Panc1 (cell line): ENCODE measurements at regions of chr12 and their contacts with region 1.

Region 1: GRCh38 chr12:46661110-46661845 is 164.5 kb downstream of the SLC38A4 start:
- DNase-seq: peak; percentile 87
- ATAC-seq: peak; percentile 65
- H3K4me3 ChIP-seq: no peak overlapping the region
- H3K27ac ChIP-seq: peak overlapping the region; percentile 89
- H3K4me1 ChIP-seq: peaks cover 79% of the 10 kb centered on the region
- H3K27me3 ChIP-seq: no peaks in the 10 kb centered on the region
- CTCF ChIP-seq: peak; percentile 84

Region 2: GRCh38 chr12:46459861-46460545 is 201.3 kb before region 1 on chr12:
- CTCF ChIA-PET with region 1: no interaction called
- POLR2A ChIA-PET with region 1: no interaction called
- in situ Hi-C with region 1: no loop called
- intact Hi-C with region 1: no loop called
- DNase-seq: no peak
- ATAC-seq: no peak
- H3K4me3 ChIP-seq: no peak overlapping the region
- H3K27ac ChIP-seq: peak overlapping the region; percentile 66
- H3K4me1 ChIP-seq: peaks cover 8% of the 10 kb centered on the region; the same call in 1 of the 2 replicates
- H3K27me3 ChIP-seq: no peaks in the 10 kb centered on the region
- CTCF ChIP-seq: no peak

Region 3: GRCh38 chr12:46473634-46474329 is 187.5 kb before region 1 on chr12:
- CTCF ChIA-PET with region 1: no interaction called
- POLR2A ChIA-PET with region 1: no interaction called
- in situ Hi-C with region 1: no loop called
- intact Hi-C with region 1: loop called (anchors 10 kb)
- DNase-seq: no peak
- ATAC-seq: peak; percentile 96
- H3K4me3 ChIP-seq: peak overlapping the region; percentile 11 to 23; a peak in 3 of 4 replicates
- H3K27ac ChIP-seq: peak overlapping the region; percentile 94
- H3K4me1 ChIP-seq: peaks cover 50% of the 10 kb centered on the region
- H3K27me3 ChIP-seq: no peaks in the 10 kb centered on the region
- CTCF ChIP-seq: no peak

Region 4: DNA sequence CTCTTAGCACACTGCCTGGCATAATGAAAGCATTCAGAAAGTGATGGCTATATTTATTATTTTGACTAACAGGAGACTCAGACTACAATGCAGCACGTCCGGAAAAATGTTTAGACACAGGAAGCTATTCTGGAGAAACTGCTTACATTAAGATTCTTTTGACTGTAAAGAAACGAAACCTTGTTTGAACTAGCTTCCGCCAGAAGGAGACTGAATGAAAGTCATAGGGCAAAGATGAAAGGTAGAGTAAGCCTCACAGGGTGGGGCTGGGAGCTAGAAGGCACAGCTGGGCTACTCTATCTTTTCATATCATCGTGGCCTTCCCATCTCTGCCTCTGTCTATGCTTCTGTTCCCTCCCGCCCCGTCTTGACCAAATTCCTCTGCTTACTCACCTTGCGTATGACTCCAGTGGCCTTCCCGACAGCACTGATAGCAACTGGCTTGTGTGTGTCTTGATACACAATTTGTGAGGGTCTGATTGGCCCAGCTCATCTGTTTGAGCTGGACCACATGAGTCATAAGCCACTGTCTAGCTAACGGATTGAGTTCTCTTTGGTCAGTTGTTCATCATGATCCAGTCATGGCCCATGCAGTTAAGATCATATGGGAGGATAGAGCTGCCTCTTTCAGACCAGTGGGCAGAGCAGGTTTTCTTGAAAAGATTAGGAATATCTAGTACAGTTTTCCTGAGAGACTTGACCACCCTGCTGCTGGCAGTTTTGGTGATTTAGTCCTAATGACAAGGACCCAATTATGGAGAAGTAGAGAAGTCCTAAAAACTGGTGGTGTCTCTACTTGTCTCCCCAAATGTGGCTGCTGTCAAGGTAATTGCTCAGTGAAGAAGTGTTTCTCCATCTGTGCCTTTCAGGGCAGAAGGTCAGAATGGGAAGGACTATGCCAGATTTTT is 137.2 kb before region 1 on chr12:
- CTCF ChIA-PET with region 1: no interaction called
- POLR2A ChIA-PET with region 1: no interaction called
- in situ Hi-C with region 1: no loop called
- intact Hi-C with region 1: no loop called
- DNase-seq: peak; percentile 94
- ATAC-seq: peak; percentile 84
- H3K4me3 ChIP-seq: peak overlapping the region; percentile 3 to 19; a peak in 3 of 4 replicates
- H3K27ac ChIP-seq: peak overlapping the region; percentile 60
- H3K4me1 ChIP-seq: peaks cover 7% of the 10 kb centered on the region
- H3K27me3 ChIP-seq: no peaks in the 10 kb centered on the region
- CTCF ChIP-seq: no peak

Region 5: DNA sequence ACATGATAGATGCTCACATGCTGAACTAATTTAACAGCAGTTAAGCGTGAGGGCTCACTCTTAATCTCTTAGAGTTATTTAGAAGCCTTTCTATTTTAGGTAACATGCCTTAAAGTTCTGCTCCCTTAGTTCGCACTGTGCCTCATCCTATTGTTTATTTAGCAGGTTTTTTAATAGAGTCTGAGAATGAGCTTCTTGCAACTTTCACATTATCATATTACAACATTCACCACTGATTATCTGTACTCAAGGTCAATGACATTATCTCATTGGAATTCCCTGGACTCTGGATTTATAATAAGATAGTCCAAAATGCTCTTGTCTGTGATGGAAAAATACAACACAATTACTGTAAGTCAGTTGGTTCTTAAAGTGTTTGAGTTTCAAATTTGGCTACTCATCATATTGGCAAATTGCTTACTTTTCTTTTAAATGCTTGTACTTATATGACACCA is 105.1 kb before region 1 on chr12:
- CTCF ChIA-PET with region 1: no interaction called
- POLR2A ChIA-PET with region 1: no interaction called
- in situ Hi-C with region 1: no loop called
- intact Hi-C with region 1: loop called (anchors 5 kb)
- DNase-seq: peak; percentile 77
- ATAC-seq: peak; percentile 88
- H3K4me3 ChIP-seq: no peak overlapping the region
- H3K27ac ChIP-seq: peak overlapping the region; percentile 91
- H3K4me1 ChIP-seq: peaks cover 30% of the 10 kb centered on the region
- H3K27me3 ChIP-seq: no peaks in the 10 kb centered on the region
- CTCF ChIP-seq: no peak

Region 6: DNA sequence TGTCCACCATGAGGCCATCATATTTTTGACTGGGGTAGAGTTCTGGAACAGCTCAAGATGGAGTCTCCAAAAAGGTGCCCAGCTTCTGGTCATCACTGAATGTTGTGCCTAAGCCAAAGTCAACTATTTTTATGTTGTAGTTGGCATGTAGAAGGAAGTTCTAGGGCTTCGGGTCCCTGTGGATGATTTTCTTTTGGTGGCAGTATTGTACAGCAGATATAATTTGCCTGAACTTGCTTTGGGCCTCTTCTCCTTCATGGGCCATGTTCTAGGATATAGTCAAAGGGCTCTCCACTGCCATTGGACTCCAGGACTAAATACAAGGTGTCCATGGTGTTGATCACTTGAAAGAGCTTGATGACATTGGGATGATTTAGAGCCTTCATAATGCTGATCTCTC is 20.9 kb after region 1 on chr12:
- CTCF ChIA-PET with region 1: no interaction called
- POLR2A ChIA-PET with region 1: no interaction called
- in situ Hi-C with region 1: no loop called
- intact Hi-C with region 1: no loop called
- DNase-seq: no peak
- ATAC-seq: no peak
- H3K4me3 ChIP-seq: no peak overlapping the region
- H3K27ac ChIP-seq: no peak overlapping the region
- H3K4me1 ChIP-seq: peaks cover 9% of the 10 kb centered on the region
- H3K27me3 ChIP-seq: no peaks in the 10 kb centered on the region
- CTCF ChIP-seq: no peak